ENCODE measurements at regions of chr5 and their contacts with region 1.

Region 1: DNA sequence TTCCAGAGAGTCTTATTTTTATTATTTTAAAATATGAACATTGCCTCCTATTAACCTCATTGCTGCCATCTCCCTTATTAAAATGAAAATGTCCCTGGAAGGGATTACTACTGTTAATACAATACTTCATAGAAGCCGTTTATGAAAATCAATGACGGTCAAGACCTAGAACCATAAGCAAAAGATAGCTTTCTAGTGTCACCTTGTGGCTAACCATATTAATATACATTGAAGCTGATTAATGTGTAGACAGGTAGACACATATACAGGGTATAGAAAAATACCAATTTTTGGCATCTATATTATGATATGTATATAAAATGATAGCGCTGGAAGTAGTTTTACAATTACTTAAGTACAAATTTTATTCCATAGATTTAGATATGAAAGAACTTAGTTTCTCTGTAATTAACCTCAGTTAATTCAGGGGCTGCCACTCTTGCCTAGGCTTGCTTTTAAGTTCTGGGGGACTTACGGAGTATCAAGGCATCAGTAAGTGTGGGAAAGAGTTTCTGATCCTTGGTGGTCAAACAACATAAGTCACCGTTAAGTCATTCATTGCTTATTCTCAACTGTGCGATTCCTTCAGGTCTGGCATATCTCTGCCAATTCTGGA is 2.5 kb upstream of the YTHDC2 start:
- DNase-seq: peak; percentile 53
- H3K27ac ChIP-seq: no peak overlapping the region
- CTCF ChIP-seq: peak; percentile 90

Region 2: GRCh38 chr5:113336975-113337374 is 174.0 kb before region 1 on chr5:
- CTCF ChIA-PET with region 1: interaction called, 22 read pairs
- POLR2A ChIA-PET with region 1: no interaction called
- DNase-seq: peak; percentile 55
- H3K27ac ChIP-seq: no peak overlapping the region
- CTCF ChIP-seq: peak; percentile 23; the same call in 1 of the 2 replicates

Region 3: GRCh38 chr5:113378959-113379541 is 131.9 kb before region 1 on chr5:
- CTCF ChIA-PET with region 1: interaction called, 50 read pairs
- POLR2A ChIA-PET with region 1: no interaction called
- DNase-seq: peak; percentile 82
- H3K27ac ChIP-seq: no peak overlapping the region
- CTCF ChIP-seq: peak; percentile 92

Region 4: DNA sequence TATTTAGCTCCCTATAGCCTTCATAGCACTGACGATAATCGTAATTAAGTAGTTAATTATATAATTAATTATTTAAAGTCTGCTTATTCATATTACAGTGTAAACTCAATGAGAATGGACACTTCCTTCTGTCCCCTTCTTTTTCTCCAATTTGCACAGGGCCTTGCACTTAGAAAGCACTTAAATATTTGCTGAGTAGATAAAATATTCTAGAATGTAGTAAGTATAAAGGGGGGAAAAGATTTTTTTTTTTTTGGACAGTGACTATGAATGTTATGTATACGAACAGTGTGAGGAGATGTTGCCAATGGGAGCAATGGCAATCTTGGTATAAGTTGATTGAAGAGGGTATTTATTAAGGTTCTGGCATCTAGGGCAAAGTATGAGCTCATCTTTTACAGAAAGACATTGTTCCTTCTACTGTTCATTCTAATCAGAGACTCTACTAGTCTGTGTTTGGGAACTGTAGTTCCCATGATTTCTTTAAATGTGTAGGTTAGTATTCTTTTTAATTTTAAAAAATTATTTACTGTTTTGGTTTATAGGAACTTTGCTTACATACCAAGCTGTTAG is 52.0 kb after region 1 on chr5:
- CTCF ChIA-PET with region 1: no interaction called
- POLR2A ChIA-PET with region 1: no interaction called
- DNase-seq: no peak
- H3K27ac ChIP-seq: no peak overlapping the region
- CTCF ChIP-seq: no peak

Measured in RWPE1 (cell line).